Transverse colon (tissue), 4 donors: ENCODE measurements at regions of chr5 and their contacts with region 1.

Region 1: DNA sequence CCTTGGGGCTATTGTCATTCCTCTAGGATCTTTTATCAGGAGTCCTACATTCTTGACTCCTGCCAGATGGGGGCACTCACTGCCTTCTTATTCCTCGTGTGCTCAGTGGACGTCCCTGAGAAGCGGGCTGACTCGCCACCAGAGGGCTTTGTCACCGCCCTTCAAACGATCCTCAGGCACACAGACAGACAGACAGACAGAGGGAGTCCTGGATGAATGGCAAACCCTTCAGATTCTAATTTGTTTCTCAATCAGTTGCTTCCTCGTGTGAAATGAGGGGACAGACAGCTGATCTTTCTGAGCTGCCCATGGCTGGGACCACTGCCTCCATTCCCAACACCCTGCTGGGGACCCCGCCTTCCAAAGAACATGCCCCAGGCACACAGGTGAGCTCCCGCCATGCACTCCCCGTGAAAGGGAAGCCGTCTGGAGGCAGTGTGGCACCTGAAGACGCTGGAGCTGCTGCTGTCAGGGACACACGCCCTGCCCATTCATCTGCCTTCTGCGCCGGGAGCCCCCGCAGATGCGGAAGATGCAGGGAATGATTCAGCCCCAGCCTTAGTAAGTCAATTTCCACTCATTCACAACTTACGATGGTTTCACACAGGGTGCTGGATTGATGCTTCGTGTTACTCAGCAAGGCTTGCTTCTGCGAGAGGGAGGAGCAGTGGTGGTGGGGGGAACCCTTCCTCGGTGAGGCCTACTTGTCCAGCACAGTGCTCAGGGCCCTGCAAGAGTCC is 24.9 kb upstream of the SH3PXD2B start:
- DNase-seq: peak; percentile 86
- H3K4me3 ChIP-seq: no peak overlapping the region
- H3K27ac ChIP-seq: peak overlapping the region in 2 of 4 donors; percentile 15 to 27
- H3K4me1 ChIP-seq: peaks cover 0 to 4% (median 3%) of the 10 kb centered on the region in 4 donors
- H3K27me3 ChIP-seq: no peaks in the 10 kb centered on the region
- CTCF ChIP-seq: peak; percentile 77 to 99 (median 86)
- EP300 ChIP-seq: no peak
- POLR2A ChIP-seq: no peak

Region 2: GRCh38 chr5:172123269-172123692 is 355.9 kb before region 1 on chr5:
- in situ Hi-C with region 1: no loop called
- intact Hi-C with region 1: no loop called
- DNase-seq: peak; percentile 47
- H3K4me3 ChIP-seq: no peak overlapping the region
- H3K27ac ChIP-seq: no peak overlapping the region
- H3K4me1 ChIP-seq: peaks cover 0 to 14% (median 4%) of the 10 kb centered on the region in 4 donors
- H3K27me3 ChIP-seq: no peaks in the 10 kb centered on the region
- CTCF ChIP-seq: peak in 1 of 5 experiments; percentile 28
- EP300 ChIP-seq: no peak
- POLR2A ChIP-seq: no peak

Region 3: GRCh38 chr5:172594867-172595466 is 115.8 kb after region 1 on chr5:
- in situ Hi-C with region 1: no loop called
- intact Hi-C with region 1: no loop called
- DNase-seq: no peak
- H3K4me3 ChIP-seq: no peak overlapping the region
- H3K27ac ChIP-seq: no peak overlapping the region
- H3K4me1 ChIP-seq: peaks cover 0 to 8% (median 2%) of the 10 kb centered on the region in 4 donors
- H3K27me3 ChIP-seq: no peaks in the 10 kb centered on the region
- CTCF ChIP-seq: no peak
- EP300 ChIP-seq: no peak
- POLR2A ChIP-seq: no peak

Region 4: GRCh38 chr5:172688349-172689217 is 209.4 kb after region 1 on chr5:
- in situ Hi-C with region 1: loop called in 1 of 4 experiments (anchors 5 kb)
- intact Hi-C with region 1: no loop called
- DNase-seq: peak; percentile 61
- H3K4me3 ChIP-seq: no peak overlapping the region
- H3K27ac ChIP-seq: peak overlapping the region; percentile 70 to 83 (median 76)
- H3K4me1 ChIP-seq: peaks cover 21 to 31% (median 27%) of the 10 kb centered on the region in 4 donors
- H3K27me3 ChIP-seq: no peaks in the 10 kb centered on the region
- CTCF ChIP-seq: no peak
- EP300 ChIP-seq: no peak
- POLR2A ChIP-seq: no peak

Region 5: GRCh38 chr5:172697123-172698121 is 218.2 kb after region 1 on chr5:
- in situ Hi-C with region 1: loop called (anchors 5 kb)
- intact Hi-C with region 1: loop called (anchors 1 kb)
- DNase-seq: peak; percentile 93
- H3K4me3 ChIP-seq: peak overlapping the region; percentile 44 to 68 (median 50)
- H3K27ac ChIP-seq: peak overlapping the region; percentile 78 to 87 (median 82)
- H3K4me1 ChIP-seq: peaks cover 9 to 38% (median 26%) of the 10 kb centered on the region in 4 donors
- H3K27me3 ChIP-seq: peaks cover 10% of the 10 kb centered on the region
- CTCF ChIP-seq: peak; percentile 83 to 99 (median 90)
- EP300 ChIP-seq: no peak
- POLR2A ChIP-seq: peak; percentile 57

Region 6: DNA sequence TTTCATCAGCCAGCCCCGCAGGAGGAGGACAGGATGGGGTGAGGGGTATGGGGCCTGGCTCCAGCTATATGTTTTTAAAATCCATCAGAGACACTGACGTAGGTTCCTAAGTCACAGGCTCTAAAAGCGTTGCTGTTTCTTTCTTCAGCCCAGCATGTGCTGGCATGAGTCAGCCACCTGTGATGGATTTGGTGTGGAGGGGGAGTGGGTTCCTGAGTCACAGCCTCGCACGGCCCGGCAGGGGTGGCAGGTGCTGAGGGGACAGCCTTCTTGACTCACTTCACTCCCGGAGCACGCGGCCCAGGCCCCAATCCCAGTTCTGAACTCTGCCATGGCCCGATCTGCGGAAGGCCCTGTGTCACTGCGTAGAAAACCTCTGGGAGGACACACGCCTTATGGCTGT is 441.2 kb after region 1 on chr5:
- in situ Hi-C with region 1: loop called in 3 of 4 experiments (anchors 25 kb)
- intact Hi-C with region 1: loop called (anchors 10 kb)
- DNase-seq: no peak
- H3K4me3 ChIP-seq: no peak overlapping the region
- H3K27ac ChIP-seq: peak overlapping the region; percentile 39 to 63 (median 46)
- H3K4me1 ChIP-seq: peaks cover 0 to 8% (median 0%) of the 10 kb centered on the region in 4 donors
- H3K27me3 ChIP-seq: no peaks in the 10 kb centered on the region
- CTCF ChIP-seq: no peak
- EP300 ChIP-seq: peak; percentile 93
- POLR2A ChIP-seq: no peak

Region 7: DNA sequence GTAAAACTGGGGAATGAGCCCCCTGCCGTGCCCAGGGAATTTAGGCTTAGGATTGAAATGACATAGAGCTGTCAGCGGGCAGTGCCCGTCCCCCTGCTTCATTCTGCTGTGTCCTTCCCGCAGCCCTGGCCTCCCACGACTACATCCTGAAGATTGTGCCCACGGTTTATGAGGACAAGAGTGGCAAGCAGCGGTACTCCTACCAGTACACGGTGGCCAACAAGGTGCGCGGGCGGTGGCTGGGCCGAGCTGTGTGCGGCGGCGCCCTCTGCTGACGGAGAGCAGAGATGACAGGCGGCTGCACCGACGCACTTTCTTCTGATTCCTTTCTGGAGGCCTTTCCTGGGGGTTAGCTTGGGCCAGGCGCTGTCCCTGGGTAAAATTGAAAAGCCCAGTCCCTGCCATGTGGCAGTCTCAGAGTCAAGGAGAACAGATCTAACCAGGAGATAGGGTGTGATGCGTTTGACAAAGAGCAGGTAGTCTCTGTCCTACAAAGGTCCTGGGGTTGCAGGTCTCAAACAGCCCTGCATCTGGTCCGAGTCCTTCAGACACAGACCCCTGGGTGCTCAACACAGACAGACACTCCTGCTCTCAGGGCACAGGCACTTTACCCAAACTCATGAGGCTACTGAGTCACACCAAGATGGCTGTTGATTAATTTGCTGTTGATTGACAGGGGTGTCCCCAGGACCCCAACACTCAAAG is 453.3 kb after region 1 on chr5:
- in situ Hi-C with region 1: loop called in 3 of 4 experiments (anchors 25 kb)
- intact Hi-C with region 1: loop called (anchors 10 kb)
- DNase-seq: peak; percentile 77
- H3K4me3 ChIP-seq: no peak overlapping the region
- H3K27ac ChIP-seq: peak overlapping the region in 2 of 4 donors; percentile 33 to 44
- H3K4me1 ChIP-seq: peaks cover 0 to 4% (median 0%) of the 10 kb centered on the region in 4 donors
- H3K27me3 ChIP-seq: no peaks in the 10 kb centered on the region
- CTCF ChIP-seq: peak; percentile 95 to 98 (median 96)
- EP300 ChIP-seq: no peak
- POLR2A ChIP-seq: no peak

Region 8: GRCh38 chr5:172958331-172959046 is 479.3 kb after region 1 on chr5:
- in situ Hi-C with region 1: no loop called
- intact Hi-C with region 1: loop called (anchors 5 kb)
- DNase-seq: peak; percentile 78
- H3K4me3 ChIP-seq: peak overlapping the region; percentile 53 to 99 (median 67)
- H3K27ac ChIP-seq: peak overlapping the region; percentile 84 to 90 (median 86)
- H3K4me1 ChIP-seq: peaks cover 7 to 19% (median 14%) of the 10 kb centered on the region in 4 donors
- H3K27me3 ChIP-seq: no peaks in the 10 kb centered on the region
- CTCF ChIP-seq: no peak
- EP300 ChIP-seq: no peak
- POLR2A ChIP-seq: no peak